HepG2 (cell line): ENCODE measurements at regions of chr2 and their contacts with region 1.

Region 1: GRCh38 chr2:8119782-8120505 is 561.9 kb upstream of the ID2 start:
- DNase-seq: peak; percentile 99
- ATAC-seq: peak; percentile 93
- H3K4me3 ChIP-seq: peak overlapping the region; percentile 15 to 53 (median 25); a peak in 4 of 6 replicates
- H3K27ac ChIP-seq: peak overlapping the region; percentile 96
- H3K4me1 ChIP-seq: peaks cover 98% of the 10 kb centered on the region
- H3K27me3 ChIP-seq: no peaks in the 10 kb centered on the region
- CTCF ChIP-seq: no peak
- EP300 ChIP-seq: peak; percentile 32 to 97
- POLR2A ChIP-seq: peak; percentile 64 to 84
- RAD21 ChIP-seq: no peak

Region 2: DNA sequence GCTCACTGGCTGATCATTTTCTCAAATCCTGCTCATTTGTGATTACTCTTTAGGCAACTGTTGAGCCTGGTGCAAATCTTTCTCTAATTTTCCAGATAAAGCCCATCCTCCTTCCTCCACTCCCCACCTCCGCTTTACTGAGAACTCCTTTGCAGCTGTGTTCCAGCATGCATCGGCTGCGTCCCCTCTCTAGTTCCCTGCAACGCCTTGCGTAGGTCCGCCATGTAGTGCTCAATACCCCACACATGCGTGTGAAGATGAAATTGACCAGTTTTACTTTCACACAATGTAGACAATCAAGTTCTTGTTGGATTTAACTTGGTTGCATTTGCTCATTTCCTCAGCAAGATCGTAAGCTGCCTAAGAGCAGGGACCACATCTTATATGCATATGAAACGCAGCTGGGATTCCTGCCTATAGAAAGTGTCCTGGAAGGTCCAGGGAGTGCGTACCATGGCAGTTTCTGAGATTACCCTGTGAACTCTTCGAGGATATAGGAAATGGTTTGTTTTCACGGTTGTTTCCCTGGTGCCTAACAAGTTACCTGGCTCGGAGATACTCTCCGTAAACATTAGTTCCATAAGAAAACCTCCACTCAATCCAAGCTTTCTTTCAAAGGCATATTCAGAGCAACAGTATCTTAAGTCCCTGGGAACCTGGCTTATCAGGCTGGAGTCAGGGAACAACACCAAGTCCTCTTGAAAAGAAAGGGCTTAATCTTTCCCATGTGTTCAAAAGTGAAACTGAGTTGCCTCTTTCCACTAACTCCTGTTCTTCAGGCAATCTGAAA is 204.4 kb before region 1 on chr2:
- CTCF ChIA-PET with region 1: no interaction called
- POLR2A ChIA-PET with region 1: no interaction called
- in situ Hi-C with region 1: no loop called
- intact Hi-C with region 1: no loop called
- DNase-seq: no peak
- ATAC-seq: no peak; the same call in 2 of the 3 replicates
- H3K4me3 ChIP-seq: peak overlapping the region in 2 of 3 experiments; percentile 21 to 30; a peak in 2 of 6 replicates
- H3K27ac ChIP-seq: no peak overlapping the region
- H3K4me1 ChIP-seq: no peaks in the 10 kb centered on the region; the same call in 1 of the 2 replicates
- H3K27me3 ChIP-seq: no peaks in the 10 kb centered on the region
- CTCF ChIP-seq: no peak
- EP300 ChIP-seq: no peak
- POLR2A ChIP-seq: no peak
- RAD21 ChIP-seq: no peak

Region 3: GRCh38 chr2:8090748-8091700 is 28.9 kb before region 1 on chr2:
- CTCF ChIA-PET with region 1: no interaction called
- POLR2A ChIA-PET with region 1: interaction called, 36 read pairs
- in situ Hi-C with region 1: no loop called
- intact Hi-C with region 1: no loop called
- DNase-seq: peak; percentile 99
- ATAC-seq: peak; percentile 100
- H3K4me3 ChIP-seq: no peak overlapping the region
- H3K27ac ChIP-seq: peak overlapping the region; percentile 87
- H3K4me1 ChIP-seq: peaks cover 54% of the 10 kb centered on the region
- H3K27me3 ChIP-seq: no peaks in the 10 kb centered on the region
- CTCF ChIP-seq: no peak
- EP300 ChIP-seq: peak; percentile 80 to 92
- POLR2A ChIP-seq: peak; percentile 56 to 61; a peak in 3 of 4 replicates
- RAD21 ChIP-seq: peak; percentile 28

Region 4: GRCh38 chr2:8138923-8139667 is 19.2 kb after region 1 on chr2:
- CTCF ChIA-PET with region 1: no interaction called
- POLR2A ChIA-PET with region 1: interaction called, 4 read pairs
- in situ Hi-C with region 1: no loop called
- intact Hi-C with region 1: loop called (anchors 2 kb)
- DNase-seq: peak; percentile 99
- ATAC-seq: peak; percentile 98
- H3K4me3 ChIP-seq: peak overlapping the region; percentile 42 to 63 (median 46); a peak in 5 of 6 replicates
- H3K27ac ChIP-seq: peak overlapping the region; percentile 98
- H3K4me1 ChIP-seq: peaks cover 100% of the 10 kb centered on the region
- H3K27me3 ChIP-seq: no peaks in the 10 kb centered on the region
- CTCF ChIP-seq: no peak
- EP300 ChIP-seq: peak; percentile 94 to 99
- POLR2A ChIP-seq: peak; percentile 69 to 89
- RAD21 ChIP-seq: peak; percentile 49